AG04449 (cell line): ENCODE measurements at regions of chr13 and their contacts with region 1.

Region 1: GRCh38 chr13:111066544-111066943 is 48.6 kb upstream of the ARHGEF7 start:
- DNase-seq: no peak
- H3K4me3 ChIP-seq: no peak overlapping the region
- CTCF ChIP-seq: no peak

Region 2: DNA sequence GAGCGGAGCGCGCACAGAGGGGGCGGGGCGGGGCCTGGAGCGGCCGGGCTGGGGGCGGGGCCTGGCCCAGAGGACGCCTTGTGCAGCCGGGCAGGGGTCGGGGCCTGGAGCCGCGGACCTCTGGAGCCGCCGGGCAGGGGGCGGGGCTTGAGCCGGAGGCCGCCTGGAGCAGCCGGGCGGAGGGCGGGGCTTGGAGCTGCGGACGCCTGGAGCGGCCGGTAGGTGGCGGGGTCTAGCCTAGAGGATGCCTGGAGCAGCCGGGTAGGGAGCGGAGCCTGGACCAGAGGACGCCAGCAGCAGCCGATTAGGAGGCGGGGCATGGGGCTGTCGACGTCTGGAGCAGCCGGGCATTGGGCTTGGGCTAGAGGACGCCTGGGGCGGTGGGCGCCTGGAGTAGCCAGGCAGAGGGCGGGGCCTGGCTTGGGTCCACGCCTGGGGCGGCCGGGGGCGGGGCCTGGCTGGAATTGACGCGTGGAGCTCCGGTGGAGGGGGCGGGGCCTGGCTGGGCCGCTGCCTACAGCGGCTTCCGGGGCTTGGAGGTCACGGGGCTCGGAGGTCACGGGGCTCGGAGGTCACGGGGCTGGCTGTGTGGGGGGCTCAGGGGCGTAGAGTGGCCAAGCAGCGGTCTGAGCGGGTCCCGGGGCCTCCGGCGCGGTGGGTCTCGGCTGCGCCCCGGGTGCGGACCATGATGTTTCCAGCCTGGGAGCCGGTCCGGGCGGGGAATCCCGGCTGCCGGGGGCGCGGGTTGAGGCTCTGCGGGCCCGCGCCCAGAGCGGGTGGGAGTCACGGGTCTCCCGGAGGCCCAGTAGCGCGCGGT is 151.3 kb before region 1 on chr13 and contains the start of gene ANKRD10:
- CTCF ChIA-PET with region 1: interaction called, 20 read pairs
- POLR2A ChIA-PET with region 1: no interaction called
- DNase-seq: peak; percentile 89
- H3K4me3 ChIP-seq: peak within 1 kb of the TSS; percentile 99
- CTCF ChIP-seq: peak; percentile 89

Region 3: GRCh38 chr13:110993788-110994187 is 72.8 kb before region 1 on chr13:
- CTCF ChIA-PET with region 1: no interaction called
- POLR2A ChIA-PET with region 1: no interaction called
- DNase-seq: no peak
- H3K4me3 ChIP-seq: no peak overlapping the region
- CTCF ChIP-seq: no peak

Region 4: DNA sequence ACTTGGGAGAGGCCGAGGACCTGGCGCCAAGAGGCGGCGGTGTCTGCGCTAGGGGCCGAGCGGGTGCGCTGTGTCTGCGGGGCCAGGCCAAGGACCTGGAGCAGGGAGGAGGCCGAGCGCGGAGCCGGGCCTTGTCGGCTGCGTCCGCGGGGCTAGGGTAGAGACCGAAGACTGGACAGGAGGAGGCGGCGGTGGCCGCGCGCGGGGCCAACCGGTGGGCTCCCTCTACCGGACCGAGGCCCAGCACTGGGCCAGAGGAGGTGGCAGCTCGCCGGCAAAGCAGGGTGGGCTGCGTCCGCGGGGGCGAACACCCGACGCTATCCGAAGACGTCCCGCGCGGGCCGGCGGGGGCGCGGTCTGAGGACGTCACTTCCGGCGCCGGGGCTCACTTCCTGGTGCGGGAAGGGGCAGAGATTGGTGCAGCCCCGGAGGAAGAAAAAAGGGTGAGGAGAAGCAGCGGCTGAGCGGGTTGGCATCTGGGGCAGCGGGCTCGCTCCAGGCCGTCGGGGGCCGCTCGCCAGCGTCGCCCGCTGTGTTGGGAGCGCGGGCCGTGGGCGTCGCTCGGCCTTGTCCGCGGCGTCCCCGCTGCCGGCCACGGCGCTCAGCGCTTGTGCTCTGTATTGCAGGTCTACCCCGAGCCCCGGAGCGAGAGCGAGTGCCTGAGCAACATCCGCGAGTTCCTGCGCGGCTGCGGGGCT is 86.9 kb after region 1 on chr13:
- CTCF ChIA-PET with region 1: interaction called, 13 read pairs
- POLR2A ChIA-PET with region 1: no interaction called
- DNase-seq: peak; percentile 42
- H3K4me3 ChIP-seq: peak overlapping the region; percentile 84
- CTCF ChIP-seq: peak; percentile 42

Region 5: DNA sequence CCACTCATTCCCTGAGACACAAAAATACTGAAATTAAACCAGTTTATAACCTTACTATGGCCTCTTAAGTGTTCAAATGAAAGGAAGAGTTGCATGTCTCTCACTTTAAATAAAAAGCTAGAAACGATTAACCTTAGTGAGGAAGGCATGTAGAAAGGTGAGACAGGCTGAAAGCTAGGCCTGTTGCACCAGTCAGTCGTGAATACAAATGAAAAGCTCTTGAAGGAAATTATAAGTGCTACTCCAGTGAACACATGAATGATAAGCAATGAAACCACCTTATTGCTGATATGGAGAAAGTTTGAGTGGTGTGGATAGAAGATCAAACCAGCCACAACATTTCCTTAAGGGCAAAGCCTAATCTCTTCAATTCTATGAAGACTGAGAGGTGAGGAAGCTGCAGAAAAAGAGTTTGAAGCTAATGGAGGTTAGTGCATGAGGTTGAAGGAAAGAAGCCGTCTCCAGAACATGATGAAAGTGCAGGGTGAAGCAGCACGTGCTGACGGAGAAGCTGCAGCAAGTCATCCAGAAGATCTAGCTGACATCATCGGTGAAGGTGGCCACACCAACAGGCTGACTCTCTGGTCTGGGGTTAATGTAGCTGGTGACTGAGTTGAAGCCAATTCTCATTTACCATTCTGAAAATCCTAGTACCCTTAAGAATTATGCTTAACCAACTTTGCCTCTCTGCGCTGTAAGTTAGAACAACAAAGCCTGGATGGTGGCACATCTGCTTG is 159.4 kb after region 1 on chr13:
- CTCF ChIA-PET with region 1: interaction called, 78 read pairs
- POLR2A ChIA-PET with region 1: no interaction called
- DNase-seq: no peak
- H3K4me3 ChIP-seq: no peak overlapping the region
- CTCF ChIP-seq: no peak

Region 6: DNA sequence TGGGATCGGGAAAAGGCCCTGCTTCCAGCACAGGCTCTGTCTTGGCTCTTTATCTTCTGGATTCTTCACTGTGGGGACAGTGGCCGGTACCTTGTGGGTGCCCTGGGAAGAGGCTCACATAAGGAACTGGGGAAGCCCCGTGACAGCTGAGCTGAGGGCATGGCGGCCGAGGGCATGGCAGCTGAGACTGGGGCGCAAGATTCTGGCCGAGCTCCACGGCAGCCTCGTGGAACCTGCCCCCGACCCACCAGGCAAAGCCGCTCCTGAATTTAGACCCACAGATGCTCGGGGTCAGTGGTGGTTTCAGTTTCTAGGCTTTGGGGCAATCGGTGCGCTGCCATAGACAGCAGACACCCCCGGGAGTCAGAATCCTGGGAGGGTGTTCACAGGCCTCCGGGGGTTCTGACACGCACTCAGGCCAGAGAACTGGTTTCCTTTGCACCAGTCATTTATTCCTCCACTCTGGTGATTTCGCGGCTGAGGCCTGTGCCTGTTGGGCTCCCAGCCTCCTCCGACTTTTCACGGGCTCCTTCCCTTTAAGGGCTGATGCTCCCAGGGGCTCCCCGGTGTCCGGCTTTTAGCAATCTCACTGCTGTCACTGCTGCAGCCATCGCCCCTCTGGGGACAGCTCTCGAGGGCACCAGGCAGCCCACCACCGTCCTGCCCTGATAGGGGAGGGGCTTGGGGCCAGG is 371.5 kb after region 1 on chr13:
- CTCF ChIA-PET with region 1: interaction called, 14 read pairs
- POLR2A ChIA-PET with region 1: no interaction called
- DNase-seq: no peak
- H3K4me3 ChIP-seq: no peak overlapping the region
- CTCF ChIP-seq: no peak